HCT116 (cell line): ENCODE measurements at regions of chr4 and their contacts with region 1.

Region 1: DNA sequence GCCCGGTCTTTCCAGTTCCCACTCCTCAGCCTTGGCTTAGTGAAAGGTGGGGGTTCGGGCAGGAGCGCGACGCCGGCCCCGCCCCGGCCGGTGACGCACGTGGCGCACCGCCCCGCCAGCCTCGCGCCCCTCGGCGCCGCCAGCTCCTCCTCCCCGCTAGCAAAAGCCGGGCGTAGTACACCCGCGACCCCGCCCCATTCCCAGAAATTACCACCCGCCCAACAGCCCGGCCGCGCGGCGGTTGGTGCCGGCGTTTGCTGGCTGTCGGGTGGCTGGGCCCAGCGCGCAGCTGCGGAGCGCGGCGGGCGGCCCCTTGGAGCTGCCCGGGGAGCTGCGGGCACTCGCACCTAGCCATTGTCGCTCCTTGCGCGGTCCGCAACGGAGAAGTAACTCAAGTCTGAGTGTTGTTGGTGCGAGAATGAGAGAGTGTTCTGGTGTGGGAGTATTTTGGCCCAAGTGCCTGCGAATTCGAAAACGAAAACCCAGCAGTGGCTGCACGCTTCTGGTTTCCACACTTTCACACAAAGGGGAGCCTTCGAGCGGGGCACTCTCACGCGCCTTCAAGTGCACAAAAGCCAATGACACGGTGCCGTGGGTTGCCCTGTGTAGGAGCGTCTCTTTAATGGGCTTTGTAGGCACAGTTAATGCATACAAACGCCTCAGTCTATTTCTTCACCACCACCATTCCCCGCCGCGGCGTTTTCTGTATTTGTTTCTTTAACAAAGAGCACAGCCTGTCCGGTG is 1.0 kb upstream of the ELF2 start:
- DNase-seq: peak; percentile 85
- ATAC-seq: peak; percentile 77
- H3K4me3 ChIP-seq: peak overlapping the region; percentile 71 to 96
- H3K27ac ChIP-seq: peak overlapping the region; percentile 72
- H3K4me1 ChIP-seq: peaks cover 0 to 25% of the 10 kb centered on the region in 2 experiments; a peak in 3 of 4 replicates
- H3K27me3 ChIP-seq: no peaks in the 10 kb centered on the region
- CTCF ChIP-seq: no peak
- POLR2A ChIP-seq: peak; percentile 84
- RAD21 ChIP-seq: no peak

Region 2: GRCh38 chr4:138680989-138681604 is 496.9 kb before region 1 on chr4:
- CTCF ChIA-PET with region 1: no interaction called
- POLR2A ChIA-PET with region 1: no interaction called
- RAD21 ChIA-PET with region 1: no interaction called
- intact Hi-C with region 1: no loop called
- DNase-seq: peak; percentile 57
- ATAC-seq: peak; percentile 84
- H3K4me3 ChIP-seq: no peak overlapping the region
- H3K27ac ChIP-seq: no peak overlapping the region
- H3K4me1 ChIP-seq: no peaks in the 10 kb centered on the region
- H3K27me3 ChIP-seq: no peaks in the 10 kb centered on the region
- CTCF ChIP-seq: peak; percentile 72 to 96 (median 74); a peak in 5 of 6 replicates
- POLR2A ChIP-seq: no peak
- RAD21 ChIP-seq: peak; percentile 91

Region 3: GRCh38 chr4:139015269-139015947 is 162.6 kb before region 1 on chr4 and contains the start of gene NOCT:
- CTCF ChIA-PET with region 1: no interaction called
- POLR2A ChIA-PET with region 1: interaction called, 4 read pairs
- RAD21 ChIA-PET with region 1: no interaction called
- intact Hi-C with region 1: loop called (anchors 5 kb)
- DNase-seq: peak; percentile 82
- ATAC-seq: peak; percentile 87
- H3K4me3 ChIP-seq: peak within 1 kb of the TSS; percentile 88 to 93
- H3K27ac ChIP-seq: peak within 1 kb of the TSS; percentile 82
- H3K4me1 ChIP-seq: peaks cover 20 to 49% of the 10 kb centered on the region in 2 experiments
- H3K27me3 ChIP-seq: no peaks in the 10 kb centered on the region
- CTCF ChIP-seq: no peak
- POLR2A ChIP-seq: peak; percentile 91
- RAD21 ChIP-seq: no peak
- total RNA-seq, gene NOCT: 20.4 TPM

Region 4: DNA sequence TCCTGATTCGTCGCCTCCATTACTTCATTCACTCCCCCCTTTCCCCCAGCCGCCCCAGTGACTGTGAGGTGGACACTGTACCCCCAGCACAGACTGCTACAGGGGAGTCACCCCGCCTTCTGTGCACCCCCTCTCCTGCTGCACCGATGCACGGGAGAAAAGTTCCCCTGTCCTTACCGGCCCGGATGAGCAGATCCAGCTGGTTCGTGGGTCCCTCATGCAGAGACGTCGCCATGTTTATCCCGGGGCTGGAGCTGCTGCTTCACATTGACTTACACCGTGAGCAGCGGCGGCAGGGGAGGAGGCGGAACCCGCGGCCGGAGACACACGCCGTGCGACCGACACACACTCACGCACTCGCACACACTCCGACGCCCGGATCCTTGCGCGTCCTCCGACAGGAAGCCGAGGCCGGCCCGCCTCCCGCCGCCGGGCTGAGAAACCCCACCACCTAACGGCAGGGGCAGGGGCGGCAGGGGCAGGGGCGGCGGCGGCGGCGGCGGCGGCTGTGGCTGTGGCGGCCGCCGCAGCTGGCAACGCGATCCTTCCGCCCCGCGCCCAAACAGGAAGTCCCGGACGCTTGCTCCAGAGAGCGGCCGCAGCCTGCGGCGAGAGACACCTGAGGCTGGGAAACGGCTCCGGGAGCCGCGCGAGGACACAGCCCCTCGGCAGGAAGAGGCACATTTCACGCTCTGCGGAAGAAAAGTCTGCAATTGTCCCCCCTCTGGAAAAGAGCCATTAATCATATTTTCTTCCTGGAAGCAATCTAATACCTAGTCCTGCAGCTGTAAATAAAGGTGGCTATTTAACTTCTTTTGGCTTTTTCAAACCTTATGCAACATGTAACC is 93.9 kb before region 1 on chr4:
- CTCF ChIA-PET with region 1: no interaction called
- POLR2A ChIA-PET with region 1: interaction called, 5 read pairs
- RAD21 ChIA-PET with region 1: no interaction called
- intact Hi-C with region 1: loop called (anchors 1 kb)
- DNase-seq: peak; percentile 86
- ATAC-seq: peak; percentile 74
- H3K4me3 ChIP-seq: peak overlapping the region; percentile 75 to 96
- H3K27ac ChIP-seq: peak overlapping the region; percentile 97
- H3K4me1 ChIP-seq: peaks cover 4 to 21% of the 10 kb centered on the region in 2 experiments; a peak in 3 of 4 replicates
- H3K27me3 ChIP-seq: no peaks in the 10 kb centered on the region
- CTCF ChIP-seq: no peak; a peak in 2 of 6 replicates
- POLR2A ChIP-seq: no peak
- RAD21 ChIP-seq: no peak

Region 5: DNA sequence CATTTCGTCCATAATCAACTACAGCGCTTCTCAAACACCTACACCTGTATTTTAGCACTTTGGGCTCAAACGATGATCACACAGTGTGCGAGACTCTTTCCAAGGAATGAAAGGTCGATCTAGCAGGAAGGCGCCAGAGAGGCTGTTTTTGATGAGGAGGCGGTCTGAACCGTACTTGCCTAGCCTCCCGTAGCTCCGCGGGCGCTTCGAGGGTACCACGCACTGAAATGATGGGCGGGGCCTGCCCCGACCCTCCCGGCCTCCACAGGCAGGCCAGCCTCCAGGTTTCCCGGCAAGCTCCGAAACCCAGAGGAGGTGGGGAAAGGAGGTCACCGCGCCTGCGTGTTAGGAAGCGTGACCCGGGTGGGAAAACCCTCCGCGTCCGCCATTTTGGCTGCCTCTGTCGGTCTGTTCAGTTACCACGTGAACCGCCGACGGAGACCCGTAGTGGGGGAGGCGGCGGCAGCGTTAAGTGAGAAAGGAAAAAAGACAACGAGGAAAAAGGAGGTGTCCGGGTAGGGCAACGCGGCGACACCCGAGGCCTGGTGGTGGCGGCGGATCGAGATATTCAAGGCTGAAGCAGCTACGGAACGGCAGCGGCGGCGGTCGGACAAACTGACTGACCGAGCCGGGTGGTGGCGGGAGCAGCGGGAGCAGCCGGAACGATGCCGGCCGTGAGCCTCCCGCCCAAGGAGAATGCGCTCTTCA is 123.2 kb after region 1 on chr4 and contains the start of gene NAA15:
- CTCF ChIA-PET with region 1: interaction called, 3 read pairs
- POLR2A ChIA-PET with region 1: interaction called, 3 read pairs
- RAD21 ChIA-PET with region 1: no interaction called
- intact Hi-C with region 1: loop called (anchors 2 kb)
- DNase-seq: peak; percentile 97
- ATAC-seq: peak; percentile 94
- H3K4me3 ChIP-seq: peak within 1 kb of the TSS; percentile 70 to 94
- H3K27ac ChIP-seq: peak within 1 kb of the TSS; percentile 70
- H3K4me1 ChIP-seq: peaks cover 18 to 30% of the 10 kb centered on the region in 2 experiments
- H3K27me3 ChIP-seq: no peaks in the 10 kb centered on the region
- CTCF ChIP-seq: no peak
- POLR2A ChIP-seq: peak; percentile 93
- RAD21 ChIP-seq: no peak
- total RNA-seq, gene NAA15: 79.7 TPM